Activated CD4-positive, alpha-beta T cell treated with anti-CD3 and anti-CD28 coated beads for 36 hours (primary cell): ENCODE measurements at regions of chr10 and their contacts with region 1.

Region 1: GRCh38 chr10:114526504-114527238 is 122.4 kb upstream of the AFAP1L2 start:
- DNase-seq: peak; percentile 95
- ATAC-seq: peak; percentile 93
- H3K4me3 Mint-ChIP-seq: peak overlapping the region; percentile 88
- H3K27ac Mint-ChIP-seq: peak overlapping the region; percentile 95
- H3K4me1 Mint-ChIP-seq: peaks cover 54% of the 10 kb centered on the region
- H3K27me3 Mint-ChIP-seq: no peaks in the 10 kb centered on the region

Region 2: GRCh38 chr10:113854011-113854760 is 672.5 kb before region 1 on chr10 and contains the starts of genes DCLRE1A and NHLRC2:
- CTCF ChIA-PET with region 1: no interaction called
- POLR2A ChIA-PET with region 1: no interaction called
- intact Hi-C with region 1: loop called in 1 of 2 experiments (anchors 10 kb)
- DNase-seq: peak; percentile 77
- ATAC-seq: peak; percentile 51
- H3K4me3 Mint-ChIP-seq: peak within 1 kb of the TSS; percentile 80
- H3K27ac Mint-ChIP-seq: peak within 1 kb of the TSS; percentile 97
- H3K4me1 Mint-ChIP-seq: peaks cover 39% of the 10 kb centered on the region
- H3K27me3 Mint-ChIP-seq: no peaks in the 10 kb centered on the region
- total RNA-seq, gene DCLRE1A: 12.5 to 14.4 TPM
- total RNA-seq, gene NHLRC2: 20.1 to 22.3 TPM

Region 3: DNA sequence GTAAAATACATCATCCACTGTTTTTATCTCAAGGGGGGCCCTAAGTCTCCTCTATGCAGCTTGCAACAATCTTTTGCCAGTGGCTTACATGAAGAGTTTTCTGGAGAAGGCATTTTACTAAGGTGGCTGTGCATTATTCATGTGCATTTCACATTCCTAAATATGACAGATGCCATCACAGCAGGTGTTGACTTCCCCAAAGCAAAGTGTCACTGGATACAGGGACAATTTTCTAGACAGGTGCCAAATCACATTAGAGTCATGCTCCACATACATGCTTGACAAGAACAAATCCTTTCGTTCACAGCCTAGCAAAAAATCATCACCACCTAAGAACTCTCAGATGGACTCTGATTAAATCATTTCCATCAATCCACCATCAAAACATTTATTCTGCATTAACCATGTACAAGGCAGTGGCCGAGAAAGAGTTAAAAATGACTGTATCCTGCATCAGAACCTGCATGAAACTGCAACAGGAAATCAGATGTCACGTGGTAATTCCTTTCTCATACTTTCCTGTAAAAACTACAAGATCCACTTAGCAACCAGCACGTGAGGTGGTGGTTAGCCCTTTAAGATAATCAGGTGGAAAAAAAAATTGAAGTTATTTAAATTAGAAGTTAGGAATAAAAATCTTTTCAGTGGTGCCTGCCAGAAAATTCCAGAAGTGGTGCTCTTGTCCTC is 34.2 kb before region 1 on chr10:
- CTCF ChIA-PET with region 1: interaction called, 187 read pairs
- POLR2A ChIA-PET with region 1: interaction called, 7 read pairs
- intact Hi-C with region 1: loop called (anchors 1 kb)
- DNase-seq: peak; percentile 69
- ATAC-seq: peak; percentile 60
- H3K4me3 Mint-ChIP-seq: peak overlapping the region; percentile 34
- H3K27ac Mint-ChIP-seq: peak overlapping the region; percentile 92
- H3K4me1 Mint-ChIP-seq: peaks cover 90% of the 10 kb centered on the region
- H3K27me3 Mint-ChIP-seq: no peaks in the 10 kb centered on the region

Region 4: DNA sequence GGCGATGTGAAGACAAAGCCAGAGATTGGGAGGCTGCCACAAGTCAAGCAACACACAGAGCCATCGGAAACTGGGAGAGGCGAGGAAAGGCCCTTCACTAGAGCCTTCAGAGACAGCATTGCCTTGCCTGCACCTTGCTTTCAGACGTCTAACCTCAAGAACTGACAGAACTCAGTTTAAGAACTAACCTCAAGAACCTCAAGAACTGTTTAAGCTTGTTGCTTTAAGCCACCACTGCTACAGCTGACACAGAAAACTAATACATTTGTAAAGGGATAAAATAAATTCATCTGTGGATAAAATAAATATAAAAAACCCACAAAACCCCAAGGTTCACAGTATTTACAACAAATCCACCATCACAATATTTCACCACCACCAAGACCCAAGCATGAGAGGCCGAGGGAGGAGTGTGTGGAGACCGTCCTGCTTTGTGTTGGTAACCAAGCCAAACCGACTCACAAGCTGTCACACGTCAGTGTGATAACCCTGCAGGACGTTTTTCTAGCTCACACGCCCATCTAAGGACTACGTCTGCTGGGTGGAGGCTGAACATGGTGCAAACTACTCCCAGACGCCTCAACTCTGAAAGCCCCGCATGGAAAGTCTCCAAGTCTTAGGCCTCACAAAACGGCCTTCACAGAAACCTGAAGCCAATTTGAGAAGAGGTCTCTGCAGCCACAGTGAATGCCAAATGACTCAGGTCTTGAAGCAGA is 14.6 kb after region 1 on chr10:
- CTCF ChIA-PET with region 1: interaction called, 32 read pairs
- POLR2A ChIA-PET with region 1: interaction called, 56 read pairs
- intact Hi-C with region 1: loop called (anchors 1 kb)
- DNase-seq: peak; percentile 85
- ATAC-seq: peak; percentile 84
- H3K4me3 Mint-ChIP-seq: peak overlapping the region; percentile 55
- H3K27ac Mint-ChIP-seq: peak overlapping the region; percentile 99
- H3K4me1 Mint-ChIP-seq: peaks cover 90% of the 10 kb centered on the region
- H3K27me3 Mint-ChIP-seq: no peaks in the 10 kb centered on the region